ENCODE measurements at regions of chr3 and their contacts with region 1.

Region 1: DNA sequence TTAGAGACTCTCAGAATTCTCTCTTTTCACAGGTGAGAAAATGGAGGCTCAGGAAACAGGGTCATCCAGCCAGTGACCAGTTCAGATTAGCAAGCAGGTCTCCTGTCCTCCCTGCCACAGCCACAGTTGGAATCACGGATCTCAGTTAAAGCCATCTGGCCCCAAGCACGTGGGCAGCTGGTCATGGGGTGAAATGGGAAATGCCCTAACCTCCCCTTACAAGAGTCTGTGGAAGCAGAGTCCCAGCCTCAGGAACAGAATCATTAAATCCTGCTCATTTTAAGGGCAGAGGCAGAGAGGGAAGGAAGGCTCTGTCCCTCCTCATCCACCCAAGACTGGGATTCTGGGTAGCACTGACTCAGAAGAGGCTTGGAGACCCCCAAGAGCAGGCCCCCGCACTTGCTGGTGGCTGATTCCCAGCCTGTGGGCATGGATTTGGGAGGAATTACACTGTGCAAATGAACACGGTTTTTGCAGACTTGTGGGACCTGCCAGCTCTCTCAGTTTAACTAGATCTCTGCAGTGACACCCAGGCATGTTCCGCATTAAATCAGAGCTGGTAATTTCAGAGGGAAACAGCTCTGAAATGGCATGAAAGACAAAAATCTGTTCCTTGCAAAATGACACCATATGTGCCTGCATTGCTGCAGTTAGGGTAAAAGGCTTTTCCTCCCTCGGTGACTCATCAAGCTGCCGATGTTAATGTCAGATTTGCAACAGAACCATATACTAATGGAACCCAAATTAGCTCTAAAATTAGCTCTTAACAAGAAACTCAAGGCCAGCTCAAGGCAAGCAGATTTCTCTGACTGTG is 89.0 kb downstream of the BDH1 start:
- DNase-seq: peak; percentile 32
- H3K4me3 Mint-ChIP-seq: peak overlapping the region; percentile 41
- H3K27ac Mint-ChIP-seq: peak overlapping the region; percentile 65
- H3K4me1 Mint-ChIP-seq: peaks cover 45% of the 10 kb centered on the region
- H3K27me3 Mint-ChIP-seq: no peaks in the 10 kb centered on the region
- CTCF ChIP-seq: no peak

Region 2: DNA sequence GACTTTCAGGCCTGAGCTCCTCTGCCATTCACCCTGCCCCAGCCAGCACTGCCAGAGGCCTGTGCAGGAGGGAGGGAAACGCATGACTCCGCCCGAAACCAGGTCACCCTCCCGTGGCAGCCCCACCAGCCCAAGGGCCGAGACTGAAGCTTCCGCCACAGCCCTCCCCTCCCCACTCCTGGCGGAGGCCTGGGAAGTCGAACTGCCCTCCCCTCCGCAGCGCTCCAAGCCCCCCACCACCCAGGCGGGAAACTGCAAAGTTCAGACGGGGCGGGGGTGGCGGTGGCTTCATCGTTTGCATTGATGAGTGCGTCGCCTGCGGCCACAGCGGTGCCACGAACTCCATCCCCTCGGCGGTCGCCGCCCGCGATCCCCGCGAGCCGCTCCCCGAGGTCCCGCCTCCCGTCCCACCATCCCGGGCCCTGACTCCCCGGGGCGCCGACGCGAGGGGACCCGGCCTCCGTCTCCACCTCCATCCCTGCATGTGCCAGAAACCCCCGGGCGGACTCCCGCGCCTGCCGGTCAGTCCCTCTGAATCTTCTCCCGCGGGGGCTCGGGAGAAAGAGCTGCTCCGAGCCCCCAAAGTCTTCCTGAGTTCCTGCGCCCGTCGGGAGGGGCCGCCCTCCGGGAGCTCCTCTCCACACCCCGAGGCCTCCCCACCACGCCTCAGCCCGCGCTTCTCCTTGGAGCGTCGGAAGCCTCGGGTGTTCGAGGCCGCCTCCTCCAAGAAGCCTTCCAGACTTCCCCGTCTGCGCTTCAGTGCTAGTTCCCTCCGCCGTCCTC is 437.9 kb before region 1 on chr3:
- CTCF ChIA-PET with region 1: no interaction called
- intact Hi-C with region 1: no loop called
- DNase-seq: peak; percentile 19
- H3K4me3 Mint-ChIP-seq: peak overlapping the region; percentile 80
- H3K27ac Mint-ChIP-seq: peak overlapping the region; percentile 52
- H3K4me1 Mint-ChIP-seq: peaks cover 23% of the 10 kb centered on the region
- H3K27me3 Mint-ChIP-seq: no peaks in the 10 kb centered on the region
- CTCF ChIP-seq: no peak

Region 3: DNA sequence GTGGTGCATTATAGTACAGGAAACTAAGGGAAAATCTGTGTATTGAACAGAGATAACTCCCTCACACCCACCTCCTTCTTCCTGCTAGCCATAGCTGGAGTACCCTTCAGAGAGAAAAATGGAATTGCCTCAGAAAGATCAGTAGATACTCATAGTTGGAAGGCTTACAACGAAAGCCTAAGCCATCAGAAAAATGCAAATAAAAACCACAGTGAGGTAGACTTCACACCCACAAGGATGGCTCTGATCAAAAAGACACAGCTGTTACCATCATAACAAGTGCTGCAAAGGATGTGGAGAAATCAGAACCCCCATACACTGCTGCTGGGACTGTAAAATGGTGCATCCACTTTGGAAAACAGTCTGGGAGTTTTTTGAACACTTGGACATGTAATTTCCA is 160.9 kb before region 1 on chr3:
- CTCF ChIA-PET with region 1: no interaction called
- intact Hi-C with region 1: loop called (anchors 5 kb)
- DNase-seq: no peak
- H3K4me3 Mint-ChIP-seq: no peak overlapping the region
- H3K27ac Mint-ChIP-seq: peak overlapping the region; percentile 75
- H3K4me1 Mint-ChIP-seq: peaks cover 51% of the 10 kb centered on the region
- H3K27me3 Mint-ChIP-seq: no peaks in the 10 kb centered on the region
- CTCF ChIP-seq: no peak

Region 4: DNA sequence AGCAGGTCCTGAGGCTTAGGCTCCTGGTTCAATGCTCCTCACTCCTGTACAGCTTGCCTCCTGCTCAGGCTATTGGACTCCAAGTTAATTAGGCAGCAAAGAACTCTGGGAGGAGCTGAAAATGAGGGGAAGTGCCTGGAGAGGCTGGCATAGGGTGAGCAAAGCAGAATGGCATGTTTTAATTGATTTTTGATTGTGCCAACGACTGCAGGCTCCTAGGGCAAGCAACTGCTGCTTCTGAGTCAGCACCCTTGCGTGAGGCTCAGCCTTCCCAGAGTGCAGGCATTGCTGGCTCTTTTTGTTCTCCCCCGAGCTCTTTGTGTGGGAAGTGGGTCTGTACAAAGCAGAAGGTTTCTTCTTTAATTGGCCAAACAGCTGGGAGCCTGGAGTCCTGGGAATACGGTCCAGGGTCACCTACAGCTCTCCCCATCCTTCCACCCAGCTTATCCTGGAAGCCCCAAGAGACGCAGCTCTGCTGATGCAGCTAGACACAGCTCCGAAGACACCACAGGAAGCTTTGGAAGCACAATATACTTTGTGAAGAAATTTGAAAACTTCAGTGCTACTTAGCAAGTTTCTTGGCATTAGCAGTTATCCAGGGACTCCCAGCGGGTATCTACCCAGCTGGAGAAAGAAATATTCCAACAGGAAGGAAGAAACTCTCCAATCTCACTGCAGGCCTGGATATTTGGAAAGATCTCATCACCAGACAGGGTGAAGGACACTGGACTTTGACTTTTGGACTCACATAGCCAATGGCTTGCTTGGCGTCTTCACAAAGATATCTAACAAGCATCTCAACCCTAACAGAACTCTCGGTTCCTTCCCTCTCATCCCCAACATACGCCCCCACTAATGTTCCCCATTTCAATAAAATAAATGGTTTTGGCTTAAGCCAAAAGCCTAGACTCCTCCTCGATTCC is 12.2 kb after region 1 on chr3:
- CTCF ChIA-PET with region 1: interaction called, 16 read pairs
- intact Hi-C with region 1: no loop called
- DNase-seq: peak; percentile 76
- H3K4me3 Mint-ChIP-seq: peak overlapping the region; percentile 18
- H3K27ac Mint-ChIP-seq: peak overlapping the region; percentile 70
- H3K4me1 Mint-ChIP-seq: peaks cover 63% of the 10 kb centered on the region
- H3K27me3 Mint-ChIP-seq: no peaks in the 10 kb centered on the region
- CTCF ChIP-seq: no peak

Region 5: DNA sequence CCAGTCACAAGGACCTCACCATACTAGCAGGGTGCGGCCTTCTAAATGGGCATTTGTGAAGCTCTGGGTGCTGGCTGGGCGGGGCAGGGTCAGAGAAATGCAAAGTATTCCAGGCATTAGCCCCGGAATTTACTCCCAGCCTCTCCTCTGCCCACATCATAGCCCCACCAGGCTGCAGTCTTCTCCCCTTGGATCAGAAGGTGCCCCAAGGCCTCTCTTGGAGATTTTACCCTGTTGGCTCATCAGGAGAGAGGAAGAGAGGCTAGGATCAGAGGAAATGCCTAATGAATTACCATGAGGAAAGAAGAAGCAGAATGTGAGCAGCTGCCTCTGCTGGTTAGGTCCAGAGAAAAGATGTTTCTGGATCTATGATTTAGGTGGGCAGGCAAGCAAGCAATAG is 23.3 kb after region 1 on chr3:
- CTCF ChIA-PET with region 1: no interaction called
- intact Hi-C with region 1: loop called (anchors 2 kb)
- DNase-seq: peak; percentile 77
- H3K4me3 Mint-ChIP-seq: no peak overlapping the region
- H3K27ac Mint-ChIP-seq: peak overlapping the region; percentile 91
- H3K4me1 Mint-ChIP-seq: peaks cover 67% of the 10 kb centered on the region
- H3K27me3 Mint-ChIP-seq: no peaks in the 10 kb centered on the region
- CTCF ChIP-seq: no peak

Region 6: GRCh38 chr3:197511130-197511529 is 44.3 kb after region 1 on chr3:
- CTCF ChIA-PET with region 1: no interaction called
- intact Hi-C with region 1: no loop called
- DNase-seq: no peak
- H3K4me3 Mint-ChIP-seq: no peak overlapping the region
- H3K27ac Mint-ChIP-seq: no peak overlapping the region
- H3K4me1 Mint-ChIP-seq: peaks cover 19% of the 10 kb centered on the region
- H3K27me3 Mint-ChIP-seq: no peaks in the 10 kb centered on the region
- CTCF ChIP-seq: no peak